Left cardiac atrium (tissue), 4 donors: ENCODE measurements at regions of chr10 and their contacts with region 1.

Region 1: GRCh38 chr10:88386821-88387773 is 196.0 kb downstream of the RNLS start:
- DNase-seq: peak; percentile 19
- ATAC-seq: peak; percentile 94 to 97

Region 2: GRCh38 chr10:88243836-88244730 is 143.0 kb before region 1 on chr10:
- intact Hi-C with region 1: loop called in 1 of 2 experiments (anchors 10 kb)
- DNase-seq: peak; percentile 84
- ATAC-seq: peak; percentile 88 to 91